MCF 10A (cell line): ENCODE measurements at regions of chr5 and their contacts with region 1.

Region 1: GRCh38 chr5:64229163-64229774 is 63.6 kb downstream of the RNF180 start:
- DNase-seq: peak; percentile 49
- H3K4me3 Mint-ChIP-seq: no peak overlapping the region
- H3K27ac Mint-ChIP-seq: no peak overlapping the region
- H3K4me1 Mint-ChIP-seq: no peaks in the 10 kb centered on the region
- H3K27me3 Mint-ChIP-seq: no peaks in the 10 kb centered on the region
- CTCF ChIP-seq: peak; percentile 53

Region 2: GRCh38 chr5:64213531-64213930 is 15.7 kb before region 1 on chr5:
- CTCF ChIA-PET with region 1: interaction called, 23 read pairs
- POLR2A ChIA-PET with region 1: no interaction called
- intact Hi-C with region 1: no loop called
- DNase-seq: no peak
- H3K4me3 Mint-ChIP-seq: no peak overlapping the region
- H3K27ac Mint-ChIP-seq: no peak overlapping the region
- H3K4me1 Mint-ChIP-seq: peaks cover 18% of the 10 kb centered on the region
- H3K27me3 Mint-ChIP-seq: no peaks in the 10 kb centered on the region
- CTCF ChIP-seq: no peak

Region 3: GRCh38 chr5:64347309-64347708 is 118.0 kb after region 1 on chr5:
- CTCF ChIA-PET with region 1: interaction called, 23 read pairs
- POLR2A ChIA-PET with region 1: no interaction called
- intact Hi-C with region 1: loop called (anchors 2 kb)
- DNase-seq: peak; percentile 13
- H3K4me3 Mint-ChIP-seq: no peak overlapping the region
- H3K27ac Mint-ChIP-seq: no peak overlapping the region
- H3K4me1 Mint-ChIP-seq: no peaks in the 10 kb centered on the region
- H3K27me3 Mint-ChIP-seq: no peaks in the 10 kb centered on the region
- CTCF ChIP-seq: peak; percentile 21

Region 4: GRCh38 chr5:64595031-64595855 is 366.0 kb after region 1 on chr5:
- CTCF ChIA-PET with region 1: interaction called, 16 read pairs
- POLR2A ChIA-PET with region 1: no interaction called
- intact Hi-C with region 1: no loop called
- DNase-seq: peak; percentile 18
- H3K4me3 Mint-ChIP-seq: no peak overlapping the region
- H3K27ac Mint-ChIP-seq: no peak overlapping the region
- H3K4me1 Mint-ChIP-seq: no peaks in the 10 kb centered on the region
- H3K27me3 Mint-ChIP-seq: no peaks in the 10 kb centered on the region
- CTCF ChIP-seq: no peak

Region 5: DNA sequence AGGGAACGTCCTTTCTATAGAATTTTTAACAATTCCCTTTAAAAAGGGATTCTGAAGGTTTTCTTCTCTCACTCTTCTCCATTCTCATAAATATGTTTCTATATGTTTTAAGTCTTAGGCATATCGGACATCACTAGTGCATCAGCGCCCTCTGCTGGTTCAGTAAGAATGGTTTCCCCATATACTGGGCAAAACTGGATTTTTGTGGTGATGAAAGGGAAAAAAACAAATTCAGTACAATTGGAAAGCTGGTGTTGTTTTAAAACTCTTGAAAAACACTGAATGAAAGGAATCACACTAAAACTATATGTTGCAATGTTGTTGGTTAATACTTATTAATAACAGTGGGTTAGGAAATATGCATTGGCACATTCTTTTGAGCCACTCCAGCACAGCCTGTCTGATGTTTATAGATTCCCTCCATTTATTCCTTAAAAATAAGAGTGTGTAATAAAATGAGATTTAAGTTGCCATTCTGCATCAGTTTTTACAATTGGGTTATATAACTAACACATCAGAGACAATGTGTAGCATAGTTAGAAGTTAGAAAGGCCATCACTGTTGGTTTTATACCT is 555.3 kb after region 1 on chr5:
- CTCF ChIA-PET with region 1: interaction called, 3 read pairs
- POLR2A ChIA-PET with region 1: no interaction called
- intact Hi-C with region 1: loop called (anchors 1 kb)
- DNase-seq: peak; percentile 83
- H3K4me3 Mint-ChIP-seq: no peak overlapping the region
- H3K27ac Mint-ChIP-seq: no peak overlapping the region
- H3K4me1 Mint-ChIP-seq: peaks cover 5% of the 10 kb centered on the region
- H3K27me3 Mint-ChIP-seq: no peaks in the 10 kb centered on the region
- CTCF ChIP-seq: peak; percentile 73